Right cardiac atrium (tissue), 5 donors: ENCODE measurements at regions of chr11 and their contacts with region 1.

Region 1: GRCh38 chr11:33457948-33458347 is 200.8 kb downstream of the HIPK3 start:
- DNase-seq: no peak
- ATAC-seq: no peak
- H3K4me3 ChIP-seq: no peak overlapping the region
- H3K27ac ChIP-seq: no peak overlapping the region
- H3K4me1 ChIP-seq: no peaks in the 10 kb centered on the region
- H3K27me3 ChIP-seq: no peaks in the 10 kb centered on the region

Region 2: DNA sequence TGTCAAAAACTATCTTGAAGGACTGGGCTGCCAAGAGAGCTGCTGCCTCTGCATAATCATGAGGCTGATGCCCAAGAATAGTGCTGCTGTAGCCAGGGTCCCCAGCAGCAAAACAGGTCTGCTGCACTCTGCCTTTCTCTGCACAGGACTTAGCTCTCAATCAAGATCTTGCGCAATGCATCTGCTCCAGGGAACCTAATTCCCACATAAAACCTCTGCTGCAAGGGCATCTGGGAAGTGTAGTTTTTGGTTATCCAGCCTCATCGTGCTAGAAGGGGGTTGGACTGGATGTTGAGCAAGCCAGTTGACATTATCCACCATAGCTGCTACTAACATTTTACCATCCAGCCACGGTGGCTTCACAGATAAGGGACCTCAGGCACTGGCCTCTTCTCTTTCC is 50.0 kb after region 1 on chr11:
- intact Hi-C with region 1: loop called in 1 of 4 experiments (anchors 5 kb)
- DNase-seq: no peak
- ATAC-seq: no peak
- H3K4me3 ChIP-seq: no peak overlapping the region
- H3K27ac ChIP-seq: no peak overlapping the region
- H3K4me1 ChIP-seq: no peaks in the 10 kb centered on the region
- H3K27me3 ChIP-seq: no peaks in the 10 kb centered on the region